ENCODE measurements at regions of chr15 and their contacts with region 1.

Region 1: GRCh38 chr15:61169904-61170695 is 59.0 kb downstream of the RORA start:
- DNase-seq: no peak
- H3K4me3 Mint-ChIP-seq: no peak overlapping the region
- H3K27ac Mint-ChIP-seq: no peak overlapping the region
- H3K4me1 Mint-ChIP-seq: no peaks in the 10 kb centered on the region
- H3K27me3 Mint-ChIP-seq: peaks cover 37% of the 10 kb centered on the region
- CTCF ChIP-seq: no peak

Region 2: DNA sequence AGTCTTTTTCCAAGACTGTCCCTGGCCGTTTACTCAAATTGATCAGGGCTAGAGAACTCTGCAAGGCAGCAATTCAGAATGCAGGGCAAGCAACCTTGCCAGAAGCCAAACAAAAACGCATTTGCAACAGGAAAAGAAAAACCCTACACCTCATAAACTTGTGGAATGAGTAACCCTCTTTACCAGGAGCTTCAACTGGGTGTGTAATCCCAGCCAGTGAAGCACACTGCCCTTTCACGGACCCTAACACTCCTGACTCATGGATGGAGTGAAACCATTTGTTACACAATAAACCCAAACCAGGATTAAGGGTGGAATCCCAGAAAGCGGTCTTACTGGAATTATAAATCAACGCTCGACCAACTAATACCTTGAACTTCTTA is 1978.3 kb before region 1 on chr15:
- CTCF ChIA-PET with region 1: no interaction called
- intact Hi-C with region 1: no loop called
- DNase-seq: peak; percentile 65
- H3K4me3 Mint-ChIP-seq: peak overlapping the region; percentile 39
- H3K27ac Mint-ChIP-seq: peak overlapping the region; percentile 81
- H3K4me1 Mint-ChIP-seq: peaks cover 36% of the 10 kb centered on the region
- H3K27me3 Mint-ChIP-seq: no peaks in the 10 kb centered on the region
- CTCF ChIP-seq: no peak

Region 3: DNA sequence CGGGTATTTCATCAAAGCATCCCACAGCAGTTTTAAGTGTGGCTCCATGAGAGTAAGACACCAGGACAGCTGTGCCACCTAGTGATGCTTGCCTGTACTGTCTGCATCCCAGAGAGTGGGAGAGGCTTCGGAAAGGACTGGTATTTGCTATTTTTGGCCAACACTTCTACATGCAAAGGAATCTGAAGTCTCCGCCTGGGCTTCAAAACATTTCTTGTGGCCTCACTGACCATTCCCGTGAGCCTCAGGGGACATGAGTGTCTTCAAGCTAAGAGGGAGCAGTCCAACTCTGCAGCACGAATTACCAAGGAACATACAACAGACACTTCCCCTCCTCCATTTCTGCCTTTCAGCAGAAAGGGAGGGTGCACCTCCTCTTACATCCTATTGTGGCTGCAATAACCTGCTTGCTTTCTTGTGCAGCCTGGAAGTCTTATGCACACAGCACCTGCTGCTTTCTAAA is 118.5 kb before region 1 on chr15:
- CTCF ChIA-PET with region 1: no interaction called
- intact Hi-C with region 1: no loop called
- DNase-seq: peak; percentile 28
- H3K4me3 Mint-ChIP-seq: no peak overlapping the region
- H3K27ac Mint-ChIP-seq: no peak overlapping the region
- H3K4me1 Mint-ChIP-seq: peaks cover 9% of the 10 kb centered on the region
- H3K27me3 Mint-ChIP-seq: peaks cover 78% of the 10 kb centered on the region
- CTCF ChIP-seq: no peak

Region 4: GRCh38 chr15:61621146-61621545 is 451.0 kb after region 1 on chr15:
- CTCF ChIA-PET with region 1: no interaction called
- intact Hi-C with region 1: loop called (anchors 1 kb)
- DNase-seq: peak; percentile 40
- H3K4me3 Mint-ChIP-seq: no peak overlapping the region
- H3K27ac Mint-ChIP-seq: no peak overlapping the region
- H3K4me1 Mint-ChIP-seq: no peaks in the 10 kb centered on the region
- H3K27me3 Mint-ChIP-seq: peaks cover 35% of the 10 kb centered on the region
- CTCF ChIP-seq: peak; percentile 26

Region 5: GRCh38 chr15:61796056-61796455 is 626.0 kb after region 1 on chr15:
- CTCF ChIA-PET with region 1: no interaction called
- intact Hi-C with region 1: no loop called
- DNase-seq: no peak
- H3K4me3 Mint-ChIP-seq: no peak overlapping the region
- H3K27ac Mint-ChIP-seq: no peak overlapping the region
- H3K4me1 Mint-ChIP-seq: no peaks in the 10 kb centered on the region
- H3K27me3 Mint-ChIP-seq: peaks cover 50% of the 10 kb centered on the region
- CTCF ChIP-seq: no peak

Measured in Calu3 (cell line).